ENCODE measurements at regions of chr6 and their contacts with region 1.

Region 1: DNA sequence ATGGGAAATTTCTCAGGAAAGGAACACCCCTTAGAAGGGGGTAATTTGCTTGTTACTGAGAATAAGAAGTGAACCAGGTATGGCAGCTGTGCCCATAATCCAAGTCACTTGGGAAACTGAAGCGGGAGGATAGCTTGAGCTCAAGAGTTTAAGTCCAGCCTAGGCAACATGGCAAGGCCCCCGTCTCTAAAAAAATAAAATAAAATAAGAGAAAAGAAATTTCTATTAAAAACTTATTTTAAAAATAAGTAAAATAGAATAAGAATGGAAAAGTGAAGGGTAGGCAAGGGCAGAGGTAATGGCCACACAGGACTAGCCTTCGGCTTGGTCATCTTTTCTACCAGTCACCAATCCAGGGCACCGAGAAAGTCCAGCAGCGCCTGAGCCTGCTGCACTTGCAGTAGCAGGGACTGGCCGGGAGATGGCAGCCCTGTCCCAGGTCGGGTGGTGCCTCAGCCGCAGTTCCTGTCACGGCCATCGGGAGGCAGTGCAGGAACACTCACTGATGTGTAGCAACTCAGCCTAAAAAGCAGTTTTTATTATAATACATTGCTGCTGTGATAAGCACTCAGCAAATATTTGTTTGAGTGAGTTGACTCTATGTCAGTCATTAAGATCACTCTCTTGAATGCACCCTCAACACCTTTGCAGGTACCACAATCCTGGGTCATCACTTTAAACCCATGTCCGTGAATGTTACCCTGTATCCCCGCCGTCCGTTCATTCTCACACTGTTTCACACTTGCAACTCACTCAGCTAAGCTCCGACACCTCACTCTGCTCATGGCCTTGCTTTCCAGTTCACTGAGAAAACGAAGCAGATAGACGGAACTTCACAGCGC is 23.2 kb upstream of the GCM1 start:
- DNase-seq: peak; percentile 74
- H3K4me3 ChIP-seq: no peak overlapping the region
- H3K27ac ChIP-seq: no peak overlapping the region
- H3K4me1 ChIP-seq: no peaks in the 10 kb centered on the region
- H3K27me3 ChIP-seq: no peaks in the 10 kb centered on the region
- CTCF ChIP-seq: peak; percentile 100

Region 2: GRCh38 chr6:53188833-53189232 is 17.0 kb after region 1 on chr6:
- CTCF ChIA-PET with region 1: no interaction called
- POLR2A ChIA-PET with region 1: no interaction called
- intact Hi-C with region 1: no loop called
- DNase-seq: no peak
- H3K4me3 ChIP-seq: no peak overlapping the region
- H3K27ac ChIP-seq: no peak overlapping the region
- H3K4me1 ChIP-seq: no peaks in the 10 kb centered on the region
- H3K27me3 ChIP-seq: no peaks in the 10 kb centered on the region
- CTCF ChIP-seq: no peak

Region 3: DNA sequence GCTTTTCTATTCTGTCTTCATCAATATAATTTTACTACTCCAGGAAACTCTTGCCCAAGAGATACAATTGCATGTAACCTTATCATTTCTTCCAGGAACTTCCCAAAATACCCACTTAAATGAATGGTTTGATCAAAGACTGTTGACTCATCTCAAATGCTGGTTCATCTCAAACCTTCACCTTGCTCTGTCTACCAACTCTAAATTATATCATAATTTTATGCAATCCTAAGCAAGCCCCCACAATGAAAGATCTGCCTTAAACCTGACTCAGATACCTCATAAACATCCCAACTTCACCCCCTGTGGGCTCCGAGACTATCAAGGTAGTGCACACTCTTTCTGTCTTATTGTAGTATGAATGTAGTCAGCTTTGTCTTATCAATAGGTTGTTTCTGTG is 42.3 kb after region 1 on chr6:
- CTCF ChIA-PET with region 1: no interaction called
- POLR2A ChIA-PET with region 1: no interaction called
- intact Hi-C with region 1: no loop called
- DNase-seq: no peak
- H3K4me3 ChIP-seq: no peak overlapping the region
- H3K27ac ChIP-seq: no peak overlapping the region
- H3K4me1 ChIP-seq: no peaks in the 10 kb centered on the region
- H3K27me3 ChIP-seq: no peaks in the 10 kb centered on the region
- CTCF ChIP-seq: no peak

Region 4: DNA sequence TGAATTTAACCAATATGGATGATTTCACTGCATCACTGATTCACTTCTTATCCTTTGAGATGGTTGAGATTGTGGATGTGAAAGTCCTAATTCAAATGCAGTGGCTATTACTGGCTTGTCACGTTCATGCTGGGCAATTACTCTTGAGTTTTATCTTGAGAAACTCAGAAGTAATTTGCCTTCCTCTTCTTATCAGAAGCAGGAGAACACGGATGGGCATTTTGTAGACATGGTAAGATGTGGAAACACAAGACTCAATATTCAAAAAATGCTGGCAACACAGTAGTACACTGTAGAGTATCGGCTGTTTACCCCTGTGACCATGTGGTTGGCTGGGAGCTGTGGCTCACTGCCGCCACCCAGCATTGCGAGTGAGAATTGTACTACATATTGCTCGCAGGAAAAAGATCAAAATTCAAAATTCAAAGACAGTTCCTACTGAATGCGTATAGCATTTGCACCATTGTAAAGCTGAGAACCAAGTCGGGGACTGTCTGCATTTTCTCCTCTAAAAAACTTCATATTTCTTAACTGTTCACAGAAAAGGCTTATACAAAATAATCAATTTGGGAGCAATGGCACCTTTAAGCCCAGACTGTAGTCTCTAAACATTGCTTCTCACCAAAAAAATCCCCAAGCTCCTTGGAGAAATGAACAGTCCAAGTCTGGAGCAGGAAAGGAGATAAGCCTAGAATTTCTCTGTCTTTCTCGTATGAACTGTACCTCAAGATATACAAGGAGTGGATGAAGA is 238.9 kb after region 1 on chr6:
- CTCF ChIA-PET with region 1: no interaction called
- POLR2A ChIA-PET with region 1: no interaction called
- intact Hi-C with region 1: loop called (anchors 1 kb)
- DNase-seq: peak; percentile 56
- H3K4me3 ChIP-seq: no peak overlapping the region
- H3K27ac ChIP-seq: no peak overlapping the region
- H3K4me1 ChIP-seq: no peaks in the 10 kb centered on the region
- H3K27me3 ChIP-seq: no peaks in the 10 kb centered on the region
- CTCF ChIP-seq: peak; percentile 77

Region 5: DNA sequence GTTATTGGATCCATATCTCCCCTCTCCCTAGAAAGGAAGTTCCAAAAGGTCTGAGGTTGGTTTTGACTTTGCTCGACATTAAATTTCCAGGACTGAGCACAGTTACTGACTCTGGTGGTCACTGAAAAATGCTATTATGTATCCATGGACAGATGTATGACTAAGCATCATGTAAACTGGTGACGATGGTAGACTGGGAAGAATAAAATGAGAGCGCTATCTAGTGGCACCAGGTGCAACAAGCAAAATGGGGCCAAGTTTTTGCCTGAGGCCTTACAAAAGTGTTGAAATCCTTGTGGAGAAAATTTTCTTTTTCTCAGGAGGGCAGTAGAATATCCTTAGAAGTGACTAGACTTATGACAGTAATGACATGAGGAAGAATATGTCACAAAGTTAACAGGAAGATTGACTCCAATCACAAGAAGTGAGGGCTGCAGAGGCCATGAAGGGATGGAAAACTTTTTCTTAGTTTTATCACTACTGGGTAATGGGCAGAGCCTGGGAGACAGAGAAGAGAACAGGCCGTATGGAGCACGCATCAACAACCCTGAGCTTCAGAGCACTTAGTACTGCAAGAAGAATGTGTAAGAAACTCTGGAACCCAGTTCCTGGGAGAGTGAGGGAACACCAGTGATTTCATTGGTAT is 265.9 kb after region 1 on chr6:
- CTCF ChIA-PET with region 1: interaction called, 5 read pairs
- POLR2A ChIA-PET with region 1: no interaction called
- intact Hi-C with region 1: loop called (anchors 1 kb)
- DNase-seq: peak; percentile 71
- H3K4me3 ChIP-seq: no peak overlapping the region
- H3K27ac ChIP-seq: no peak overlapping the region
- H3K4me1 ChIP-seq: no peaks in the 10 kb centered on the region
- H3K27me3 ChIP-seq: no peaks in the 10 kb centered on the region
- CTCF ChIP-seq: peak; percentile 82

Measured in A673 (cell line).